ENCODE measurements at regions of chrX and their contacts with region 1.

Region 1: DNA sequence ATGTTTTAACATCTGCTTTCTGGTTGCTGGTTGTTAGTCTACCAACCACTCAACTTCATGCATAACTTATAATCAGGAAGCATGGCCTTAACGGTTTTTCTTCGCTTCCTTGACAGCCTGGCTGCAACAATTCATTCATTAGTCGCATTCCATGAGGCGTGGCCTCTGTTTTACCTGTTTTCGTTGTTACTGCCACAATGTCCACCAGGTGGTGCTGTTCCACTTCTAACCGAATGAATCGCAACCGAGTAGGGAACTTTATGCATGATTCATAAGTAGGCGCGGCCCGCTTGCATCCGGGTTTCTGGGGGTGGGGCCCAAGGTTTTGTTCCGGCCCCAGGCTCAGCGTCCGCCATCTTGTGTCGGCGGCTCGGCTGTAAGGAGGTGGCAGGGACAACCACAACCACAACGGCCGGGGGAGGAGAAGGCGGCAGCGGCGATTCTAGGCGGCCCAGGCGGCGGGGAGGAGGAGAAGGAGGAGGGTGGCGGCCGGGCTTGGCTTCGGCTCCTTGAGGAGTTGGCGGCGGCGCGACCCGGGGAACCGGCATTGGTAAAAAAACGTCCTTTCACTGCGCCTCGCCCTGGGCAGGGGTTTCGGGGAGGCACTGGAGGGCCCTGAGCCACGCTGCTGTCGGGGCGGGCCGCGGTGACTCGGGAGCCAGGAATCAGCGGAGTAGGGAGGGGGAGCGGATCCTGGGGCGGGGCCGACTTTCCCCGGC is at the start of gene UBA1:
- DNase-seq: peak; percentile 87
- H3K4me3 Mint-ChIP-seq: peak within 1 kb of the TSS; percentile 96
- H3K27ac Mint-ChIP-seq: peak within 1 kb of the TSS; percentile 98
- H3K4me1 Mint-ChIP-seq: peaks cover 59% of the 10 kb centered on the region
- H3K27me3 Mint-ChIP-seq: no peaks in the 10 kb centered on the region
- total RNA-seq, gene UBA1: 221 and 223 TPM in 2 replicates

Region 2: GRCh38 chrX:46777971-46778810 is 415.4 kb before region 1 on chrX:
- intact Hi-C with region 1: no loop called
- DNase-seq: no peak
- H3K4me3 Mint-ChIP-seq: no peak overlapping the region
- H3K27ac Mint-ChIP-seq: no peak overlapping the region
- H3K4me1 Mint-ChIP-seq: peaks cover 11% of the 10 kb centered on the region
- H3K27me3 Mint-ChIP-seq: no peaks in the 10 kb centered on the region

Region 3: GRCh38 chrX:46836701-46837557 is 356.7 kb before region 1 on chrX and contains the start of gene RP2:
- intact Hi-C with region 1: loop called (anchors 5 kb)
- DNase-seq: peak; percentile 79
- H3K4me3 Mint-ChIP-seq: peak within 1 kb of the TSS; percentile 96
- H3K27ac Mint-ChIP-seq: peak within 1 kb of the TSS; percentile 89
- H3K4me1 Mint-ChIP-seq: no peaks in the 10 kb centered on the region
- H3K27me3 Mint-ChIP-seq: peaks cover 4% of the 10 kb centered on the region
- total RNA-seq, gene RP2: 7.1 and 7.5 TPM in 2 replicates

Region 4: GRCh38 chrX:47217642-47218279 is 24.1 kb after region 1 on chrX:
- intact Hi-C with region 1: loop called (anchors 1 kb)
- DNase-seq: peak; percentile 92
- H3K4me3 Mint-ChIP-seq: peak overlapping the region; percentile 90
- H3K27ac Mint-ChIP-seq: peak overlapping the region; percentile 97
- H3K4me1 Mint-ChIP-seq: peaks cover 41% of the 10 kb centered on the region
- H3K27me3 Mint-ChIP-seq: no peaks in the 10 kb centered on the region

Region 5: DNA sequence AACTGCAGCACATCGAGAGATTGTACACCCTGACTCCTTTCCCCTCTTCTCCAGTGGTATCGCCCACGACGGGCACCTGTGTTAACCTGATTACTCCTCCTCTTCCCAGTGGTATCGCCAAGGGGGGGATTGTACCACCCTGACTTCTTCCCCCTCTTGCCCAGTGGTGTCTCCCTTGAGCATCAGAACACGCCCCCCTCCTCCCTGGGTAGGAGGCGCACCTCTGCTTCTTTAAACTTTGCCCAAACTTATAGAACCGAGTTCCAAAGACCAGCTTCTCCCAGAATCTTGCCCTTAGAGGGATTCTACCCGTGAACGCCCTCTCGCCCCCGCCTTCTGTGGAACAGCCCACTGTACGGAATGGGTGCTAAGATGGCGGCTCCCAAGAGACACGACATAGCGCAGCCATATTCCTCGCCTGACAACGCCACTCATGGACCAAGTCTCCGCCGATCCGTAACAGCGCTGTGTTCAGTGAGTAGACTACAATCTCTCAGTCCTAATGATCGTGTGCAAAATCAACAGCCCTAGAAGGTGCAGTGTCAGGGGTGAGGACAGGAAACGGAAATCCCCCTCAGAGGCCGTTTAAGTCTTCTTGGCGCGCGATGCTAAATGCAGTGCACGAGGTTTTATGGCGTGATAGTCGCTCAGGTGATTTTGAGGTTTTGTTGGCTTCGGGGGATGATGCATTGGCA is 172.5 kb after region 1 on chrX:
- intact Hi-C with region 1: loop called (anchors 1 kb)
- DNase-seq: peak; percentile 51
- H3K4me3 Mint-ChIP-seq: peak overlapping the region; percentile 89
- H3K27ac Mint-ChIP-seq: peak overlapping the region; percentile 86
- H3K4me1 Mint-ChIP-seq: peaks cover 11% of the 10 kb centered on the region
- H3K27me3 Mint-ChIP-seq: peaks cover 2% of the 10 kb centered on the region

Region 6: DNA sequence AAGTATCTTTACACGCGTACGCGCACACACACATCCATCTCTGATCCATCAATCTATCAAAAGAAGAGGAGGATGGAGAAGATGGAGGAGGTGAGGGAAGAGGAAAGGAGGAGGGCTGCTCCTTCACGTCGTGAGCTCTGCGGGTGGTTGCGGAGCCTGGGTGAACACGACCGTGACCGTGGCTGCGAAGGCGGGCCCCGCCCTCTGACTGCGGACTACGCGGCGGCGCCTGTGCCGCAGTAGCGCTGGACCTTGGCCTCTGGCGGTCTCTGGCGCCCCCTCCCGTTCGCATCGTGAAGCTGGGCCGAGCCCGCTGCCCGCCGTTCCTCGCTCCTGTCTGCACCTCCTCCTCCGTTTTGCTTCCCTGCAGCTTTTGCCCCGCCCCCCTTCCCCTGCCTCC is 329.7 kb after region 1 on chrX:
- intact Hi-C with region 1: loop called (anchors 1 kb)
- DNase-seq: peak; percentile 69
- H3K4me3 Mint-ChIP-seq: peak overlapping the region; percentile 70
- H3K27ac Mint-ChIP-seq: no peak overlapping the region
- H3K4me1 Mint-ChIP-seq: no peaks in the 10 kb centered on the region
- H3K27me3 Mint-ChIP-seq: no peaks in the 10 kb centered on the region

Region 7: DNA sequence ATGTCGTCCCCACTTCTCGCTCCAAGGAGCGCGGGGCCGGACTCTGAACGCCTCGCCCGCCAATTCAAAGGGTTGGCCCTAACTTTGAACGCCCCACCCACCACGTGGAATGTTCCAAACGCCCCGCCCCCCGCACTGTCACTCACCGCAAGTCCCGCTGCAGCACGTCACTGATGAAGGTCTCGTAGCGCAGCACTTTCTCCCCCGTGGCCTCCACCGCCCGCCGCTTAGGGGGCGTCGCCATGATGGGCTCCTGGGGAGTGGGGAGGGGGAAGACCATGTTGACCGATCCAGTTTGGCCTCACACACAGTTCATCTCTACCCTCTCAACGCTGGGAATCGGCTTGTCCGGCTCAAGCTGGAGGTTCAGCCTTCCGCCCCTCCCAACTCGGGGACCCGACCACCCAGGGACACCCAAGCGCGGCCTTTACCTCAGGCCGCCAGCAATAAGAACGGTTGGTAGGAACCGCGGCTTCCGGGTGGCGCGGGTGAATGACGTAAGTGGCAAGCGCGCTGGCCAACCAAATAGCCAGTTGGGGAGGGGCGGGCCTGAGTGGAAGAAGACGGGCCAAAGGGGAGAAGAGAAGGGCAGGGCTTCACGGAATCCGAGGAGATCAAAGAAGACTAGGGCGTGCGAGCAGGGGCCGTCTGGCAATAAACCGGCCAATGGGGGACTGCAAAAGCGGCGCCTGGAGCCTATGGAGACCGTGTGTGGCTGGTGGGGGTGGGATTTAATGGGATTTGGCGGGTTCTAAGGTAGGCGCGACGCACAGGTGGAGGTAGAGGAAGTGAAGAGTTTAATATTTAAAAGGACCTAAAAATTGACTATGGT is 465.3 kb after region 1 on chrX and contains the start of gene UXT:
- intact Hi-C with region 1: loop called (anchors 2 kb)
- DNase-seq: peak; percentile 89
- H3K4me3 Mint-ChIP-seq: peak within 1 kb of the TSS; percentile 90
- H3K27ac Mint-ChIP-seq: peak within 1 kb of the TSS; percentile 98
- H3K4me1 Mint-ChIP-seq: peaks cover 31% of the 10 kb centered on the region
- H3K27me3 Mint-ChIP-seq: no peaks in the 10 kb centered on the region
- total RNA-seq, gene UXT: 163 and 173 TPM in 2 replicates